A673 (cell line): ENCODE measurements at regions of chr10 and their contacts with region 1.

Region 1: GRCh38 chr10:12981570-12981969 is 19.9 kb downstream of the CCDC3 start:
- DNase-seq: no peak
- H3K4me3 ChIP-seq: no peak overlapping the region
- H3K27ac ChIP-seq: no peak overlapping the region
- H3K4me1 ChIP-seq: peaks cover 8% of the 10 kb centered on the region
- H3K27me3 ChIP-seq: no peaks in the 10 kb centered on the region
- CTCF ChIP-seq: no peak

Region 2: DNA sequence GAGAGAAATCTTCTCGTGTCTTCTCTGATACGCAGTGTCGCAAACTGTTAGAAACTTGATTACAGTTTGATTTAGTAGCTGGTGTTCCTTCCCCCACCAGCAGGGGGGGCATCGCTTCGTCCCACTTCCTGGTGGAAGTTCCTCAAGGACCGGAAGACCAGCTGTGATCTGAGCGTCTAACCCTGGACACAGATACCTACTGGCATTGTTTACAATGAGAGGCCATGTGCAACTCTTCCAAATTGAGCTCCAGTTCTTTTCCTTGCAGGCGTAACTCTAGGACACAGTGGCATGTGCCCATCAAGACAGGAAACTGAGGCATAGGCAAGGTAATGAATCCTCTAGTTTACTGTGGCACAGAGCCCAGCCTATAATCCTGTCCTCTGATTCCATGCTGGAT is 199.0 kb before region 1 on chr10:
- CTCF ChIA-PET with region 1: no interaction called
- POLR2A ChIA-PET with region 1: interaction called, 11 read pairs
- intact Hi-C with region 1: no loop called
- DNase-seq: peak; percentile 54
- H3K4me3 ChIP-seq: no peak overlapping the region
- H3K27ac ChIP-seq: no peak overlapping the region
- H3K4me1 ChIP-seq: peaks cover 51% of the 10 kb centered on the region
- H3K27me3 ChIP-seq: no peaks in the 10 kb centered on the region
- CTCF ChIP-seq: peak; percentile 87

Region 3: GRCh38 chr10:12800302-12800701 is 181.3 kb before region 1 on chr10:
- CTCF ChIA-PET with region 1: no interaction called
- POLR2A ChIA-PET with region 1: no interaction called
- intact Hi-C with region 1: no loop called
- DNase-seq: no peak
- H3K4me3 ChIP-seq: no peak overlapping the region
- H3K27ac ChIP-seq: no peak overlapping the region
- H3K4me1 ChIP-seq: peaks cover 5% of the 10 kb centered on the region
- H3K27me3 ChIP-seq: no peaks in the 10 kb centered on the region
- CTCF ChIP-seq: 0 out of 2 replicates have a peak, but pooled peaks have one; percentile 21